ENCODE measurements at regions of chr13 and their contacts with region 1.

Region 1: GRCh38 chr13:87671031-87671752 is at the start of gene SLITRK5:
- DNase-seq: peak; percentile 90
- H3K4me3 ChIP-seq: peak within 1 kb of the TSS; percentile 68
- H3K27ac ChIP-seq: peak within 1 kb of the TSS; percentile 26
- H3K4me1 ChIP-seq: peaks cover 12% of the 10 kb centered on the region
- H3K27me3 ChIP-seq: peaks cover 22% of the 10 kb centered on the region
- CTCF ChIP-seq: peak; percentile 95
- total RNA-seq, gene SLITRK5: 1.3 and 2.2 TPM in 2 replicates

Region 2: GRCh38 chr13:86870444-86870843 is 800.7 kb before region 1 on chr13:
- CTCF ChIA-PET with region 1: no interaction called
- POLR2A ChIA-PET with region 1: no interaction called
- intact Hi-C with region 1: loop called (anchors 5 kb)
- DNase-seq: peak; percentile 37
- H3K4me3 ChIP-seq: no peak overlapping the region
- H3K27ac ChIP-seq: no peak overlapping the region
- H3K4me1 ChIP-seq: no peaks in the 10 kb centered on the region
- H3K27me3 ChIP-seq: no peaks in the 10 kb centered on the region
- CTCF ChIP-seq: peak; percentile 76

Region 3: GRCh38 chr13:87274209-87274819 is 396.9 kb before region 1 on chr13:
- CTCF ChIA-PET with region 1: no interaction called
- POLR2A ChIA-PET with region 1: no interaction called
- intact Hi-C with region 1: loop called (anchors 10 kb)
- DNase-seq: peak; percentile 60
- H3K4me3 ChIP-seq: no peak overlapping the region
- H3K27ac ChIP-seq: no peak overlapping the region
- H3K4me1 ChIP-seq: no peaks in the 10 kb centered on the region
- H3K27me3 ChIP-seq: no peaks in the 10 kb centered on the region
- CTCF ChIP-seq: peak; percentile 77

Region 4: GRCh38 chr13:87524775-87525174 is 146.4 kb before region 1 on chr13:
- CTCF ChIA-PET with region 1: no interaction called
- POLR2A ChIA-PET with region 1: no interaction called
- intact Hi-C with region 1: no loop called
- DNase-seq: no peak
- H3K4me3 ChIP-seq: no peak overlapping the region
- H3K27ac ChIP-seq: no peak overlapping the region
- H3K4me1 ChIP-seq: no peaks in the 10 kb centered on the region
- H3K27me3 ChIP-seq: no peaks in the 10 kb centered on the region
- CTCF ChIP-seq: no peak

Region 5: DNA sequence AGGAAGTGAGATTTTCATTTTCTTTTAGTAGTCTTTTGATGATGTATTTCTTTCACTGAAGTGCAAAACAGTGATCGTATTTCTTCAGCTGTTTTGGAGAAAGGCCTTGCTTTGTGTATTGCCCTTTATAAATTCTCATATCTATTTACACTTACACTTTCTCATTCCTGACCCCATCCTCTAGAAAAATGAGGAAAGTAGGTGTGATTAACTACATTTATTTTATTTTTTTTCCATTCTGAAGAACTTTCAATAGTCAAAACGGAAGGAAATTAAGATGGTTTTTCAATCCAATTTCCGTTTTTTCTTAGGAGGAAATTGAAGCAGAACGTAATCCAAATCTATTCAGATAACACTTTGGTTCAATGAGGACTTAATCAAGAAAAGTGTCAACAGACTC is 188.1 kb after region 1 on chr13:
- CTCF ChIA-PET with region 1: no interaction called
- POLR2A ChIA-PET with region 1: no interaction called
- intact Hi-C with region 1: loop called (anchors 1 kb)
- DNase-seq: peak; percentile 93
- H3K4me3 ChIP-seq: no peak overlapping the region
- H3K27ac ChIP-seq: peak overlapping the region; percentile 78
- H3K4me1 ChIP-seq: peaks cover 36% of the 10 kb centered on the region
- H3K27me3 ChIP-seq: no peaks in the 10 kb centered on the region
- CTCF ChIP-seq: no peak

Region 6: GRCh38 chr13:87981416-87981815 is 310.2 kb after region 1 on chr13:
- CTCF ChIA-PET with region 1: no interaction called
- POLR2A ChIA-PET with region 1: no interaction called
- intact Hi-C with region 1: loop called (anchors 10 kb)
- DNase-seq: no peak
- H3K4me3 ChIP-seq: no peak overlapping the region
- H3K27ac ChIP-seq: no peak overlapping the region
- H3K4me1 ChIP-seq: no peaks in the 10 kb centered on the region
- H3K27me3 ChIP-seq: no peaks in the 10 kb centered on the region
- CTCF ChIP-seq: no peak

Region 7: DNA sequence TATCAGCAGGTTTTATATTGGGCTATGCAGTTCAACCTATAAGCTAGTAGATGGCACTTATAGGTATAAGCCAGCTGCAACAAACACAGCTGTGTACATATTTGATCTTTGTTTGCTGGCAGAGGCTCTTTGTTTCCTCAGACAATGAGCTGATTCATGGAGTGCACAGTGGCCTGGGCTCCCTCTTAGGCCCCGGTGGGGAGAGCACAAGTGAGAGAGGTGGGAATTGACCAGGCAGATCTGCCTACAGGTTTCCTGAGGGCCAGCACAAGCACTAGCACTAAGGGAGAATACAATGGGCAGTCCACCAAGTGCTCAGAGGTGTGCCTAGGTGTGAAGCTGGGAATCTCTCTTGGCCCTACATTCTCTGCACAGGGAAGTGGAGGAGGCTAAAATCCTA is 1390.6 kb after region 1 on chr13:
- CTCF ChIA-PET with region 1: no interaction called
- POLR2A ChIA-PET with region 1: no interaction called
- intact Hi-C with region 1: loop called (anchors 5 kb)
- DNase-seq: no peak
- H3K4me3 ChIP-seq: no peak overlapping the region
- H3K27ac ChIP-seq: no peak overlapping the region
- H3K4me1 ChIP-seq: no peaks in the 10 kb centered on the region
- H3K27me3 ChIP-seq: no peaks in the 10 kb centered on the region
- CTCF ChIP-seq: no peak

Measured in A673 (cell line).